AG04449 (cell line): ENCODE measurements at regions of chr10 and their contacts with region 1.

Region 1: GRCh38 chr10:50367732-50368131 is 116.4 kb upstream of the ASAH2 start:
- DNase-seq: no peak
- H3K4me3 ChIP-seq: no peak overlapping the region
- CTCF ChIP-seq: peak; percentile 34

Region 2: GRCh38 chr10:50381642-50382041 is 13.9 kb after region 1 on chr10:
- CTCF ChIA-PET with region 1: interaction called, 10 read pairs
- POLR2A ChIA-PET with region 1: no interaction called
- DNase-seq: no peak
- H3K4me3 ChIP-seq: no peak overlapping the region
- CTCF ChIP-seq: no peak

Region 3: DNA sequence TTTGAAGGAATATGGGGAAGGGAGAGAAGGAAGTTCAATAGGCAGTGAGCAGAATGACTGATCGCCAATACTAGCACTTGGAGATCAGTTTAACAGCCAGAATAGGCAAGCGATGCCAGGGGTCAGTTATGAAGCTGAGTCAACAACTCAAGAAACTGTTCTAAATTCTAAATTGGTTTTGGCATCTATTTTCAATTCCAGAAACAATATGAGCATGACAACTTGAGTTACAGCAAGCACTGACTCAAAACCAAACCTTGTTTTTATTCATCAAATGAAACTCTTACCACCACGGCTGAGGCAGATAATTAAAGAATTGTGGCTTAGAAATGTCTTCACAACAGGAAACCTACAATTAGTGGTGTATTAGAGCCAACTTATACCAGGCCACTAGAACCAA is 64.1 kb after region 1 on chr10:
- CTCF ChIA-PET with region 1: no interaction called
- POLR2A ChIA-PET with region 1: no interaction called
- DNase-seq: no peak
- H3K4me3 ChIP-seq: no peak overlapping the region
- CTCF ChIP-seq: no peak

Region 4: GRCh38 chr10:50508315-50509051 is 140.8 kb after region 1 on chr10:
- CTCF ChIA-PET with region 1: no interaction called
- POLR2A ChIA-PET with region 1: no interaction called
- DNase-seq: no peak
- H3K4me3 ChIP-seq: no peak overlapping the region
- CTCF ChIP-seq: no peak